OCI-LY7 (cell line): ENCODE measurements at regions of chr3 and their contacts with region 1.

Region 1: GRCh38 chr3:150384296-150385212 is 23.5 kb upstream of the TSC22D2 start:
- DNase-seq: peak; percentile 83
- H3K4me3 ChIP-seq: peak overlapping the region; percentile 16
- H3K27ac ChIP-seq: peak overlapping the region; percentile 27
- H3K4me1 ChIP-seq: peaks cover 19% of the 10 kb centered on the region
- CTCF ChIP-seq: peak; percentile 69

Region 2: GRCh38 chr3:150396956-150397550 is 12.5 kb after region 1 on chr3:
- CTCF ChIA-PET with region 1: no interaction called
- POLR2A ChIA-PET with region 1: interaction called, 11 read pairs
- intact Hi-C with region 1: no loop called
- DNase-seq: no peak
- H3K4me3 ChIP-seq: no peak overlapping the region
- H3K27ac ChIP-seq: no peak overlapping the region
- H3K4me1 ChIP-seq: no peaks in the 10 kb centered on the region
- CTCF ChIP-seq: no peak